Activated CD4-positive, alpha-beta memory T cell treated with anti-CD3 and anti-CD28 coated beads for 36 hours (primary cell): ENCODE measurements at regions of chr5 and their contacts with region 1.

Region 1: DNA sequence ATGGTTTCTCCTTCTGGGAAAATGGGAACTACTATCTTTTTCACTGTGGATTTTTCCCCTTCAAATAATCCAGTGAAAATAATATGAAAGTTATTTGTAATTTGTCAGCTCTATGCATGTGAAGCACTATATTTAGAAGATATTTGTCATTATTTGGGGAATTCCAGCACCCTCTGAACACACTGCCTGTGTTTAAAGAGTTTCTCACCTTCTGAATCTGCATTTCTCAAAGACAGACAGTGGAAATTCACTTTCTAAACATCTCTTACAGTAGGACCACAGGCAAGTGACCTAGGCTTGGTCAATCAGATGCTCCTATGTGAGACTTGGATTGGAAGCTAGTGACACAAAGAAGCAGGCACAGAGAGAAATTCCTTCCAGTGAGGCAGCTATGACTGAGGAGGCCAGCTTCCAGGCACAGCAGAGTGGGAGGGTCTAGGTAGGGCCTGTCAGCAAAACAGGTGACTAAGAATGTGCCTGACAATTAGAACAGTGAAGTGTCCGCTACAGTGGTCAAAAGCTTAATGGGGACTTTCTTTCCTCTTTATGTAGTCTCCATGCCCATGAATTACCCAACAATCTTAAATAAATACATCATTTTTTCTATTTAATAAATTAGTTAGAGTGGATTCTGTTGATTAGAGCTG is 167.2 kb downstream of the HMHB1 start:
- DNase-seq: no peak
- H3K4me3 Mint-ChIP-seq: no peak overlapping the region
- H3K27ac Mint-ChIP-seq: no peak overlapping the region
- H3K4me1 Mint-ChIP-seq: no peaks in the 10 kb centered on the region
- H3K27me3 Mint-ChIP-seq: peaks cover 3% of the 10 kb centered on the region

Region 2: DNA sequence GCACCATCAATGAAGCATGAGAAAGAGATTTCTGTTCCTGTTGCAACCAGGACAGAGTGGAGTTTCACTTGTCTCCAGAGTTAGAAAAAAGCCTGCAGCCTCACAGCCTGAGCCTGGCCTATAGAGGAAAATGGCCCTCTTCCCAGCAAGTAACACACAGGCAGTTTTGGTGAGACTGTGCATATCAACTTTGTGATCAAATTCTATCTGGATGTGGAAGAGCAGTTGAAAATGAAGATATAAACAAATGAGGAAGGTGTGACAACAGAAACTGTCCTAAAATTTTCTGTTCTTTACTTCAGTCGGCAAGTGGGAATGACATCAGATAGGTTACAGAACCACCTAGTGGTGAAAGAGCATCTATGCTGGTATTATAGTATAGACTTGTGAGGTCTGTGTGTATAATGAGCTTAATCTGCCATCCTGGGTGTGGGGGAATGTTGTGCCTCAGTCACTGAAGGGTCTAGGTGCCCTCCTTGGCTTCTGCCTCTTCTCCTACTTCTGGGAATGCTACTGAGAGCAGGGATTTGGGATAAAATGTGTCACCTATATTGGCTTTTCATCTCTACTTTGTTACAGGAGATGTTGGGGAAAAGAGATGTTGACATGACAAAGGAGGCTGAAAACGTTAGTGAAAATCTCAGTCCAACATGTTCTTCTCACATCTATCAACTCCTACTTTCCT is 163.1 kb after region 1 on chr5:
- CTCF ChIA-PET with region 1: no interaction called
- POLR2A ChIA-PET with region 1: no interaction called
- intact Hi-C with region 1: loop called (anchors 5 kb)
- DNase-seq: no peak
- H3K4me3 Mint-ChIP-seq: no peak overlapping the region
- H3K27ac Mint-ChIP-seq: no peak overlapping the region
- H3K4me1 Mint-ChIP-seq: peaks cover 3% of the 10 kb centered on the region
- H3K27me3 Mint-ChIP-seq: peaks cover 4% of the 10 kb centered on the region